ENCODE measurements at regions of chr6 and their contacts with region 1.

Region 1: DNA sequence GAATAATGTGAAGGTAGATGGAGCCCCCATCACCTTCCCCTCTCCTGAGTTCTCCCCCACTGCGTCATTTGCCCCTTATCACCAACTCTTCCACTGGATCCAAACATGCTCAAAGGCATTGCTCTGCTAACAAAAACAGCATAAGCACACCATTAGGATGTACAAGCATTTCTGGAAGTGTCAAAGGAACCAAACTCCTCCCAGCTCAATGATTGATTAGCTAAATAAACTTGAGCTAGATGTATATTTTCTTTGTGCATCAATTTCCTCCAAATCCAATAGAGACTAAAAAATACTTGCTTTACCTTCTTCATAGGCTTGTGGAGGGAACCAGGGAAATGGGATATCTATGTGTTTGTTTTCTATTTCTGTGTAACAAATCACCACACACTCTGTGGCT is 248.4 kb upstream of the JARID2 start:
- DNase-seq: no peak
- H3K4me3 ChIP-seq: no peak overlapping the region
- H3K27ac ChIP-seq: no peak overlapping the region
- H3K4me1 ChIP-seq: peaks cover 20% of the 10 kb centered on the region
- H3K27me3 ChIP-seq: no peaks in the 10 kb centered on the region
- CTCF ChIP-seq: no peak

Region 2: DNA sequence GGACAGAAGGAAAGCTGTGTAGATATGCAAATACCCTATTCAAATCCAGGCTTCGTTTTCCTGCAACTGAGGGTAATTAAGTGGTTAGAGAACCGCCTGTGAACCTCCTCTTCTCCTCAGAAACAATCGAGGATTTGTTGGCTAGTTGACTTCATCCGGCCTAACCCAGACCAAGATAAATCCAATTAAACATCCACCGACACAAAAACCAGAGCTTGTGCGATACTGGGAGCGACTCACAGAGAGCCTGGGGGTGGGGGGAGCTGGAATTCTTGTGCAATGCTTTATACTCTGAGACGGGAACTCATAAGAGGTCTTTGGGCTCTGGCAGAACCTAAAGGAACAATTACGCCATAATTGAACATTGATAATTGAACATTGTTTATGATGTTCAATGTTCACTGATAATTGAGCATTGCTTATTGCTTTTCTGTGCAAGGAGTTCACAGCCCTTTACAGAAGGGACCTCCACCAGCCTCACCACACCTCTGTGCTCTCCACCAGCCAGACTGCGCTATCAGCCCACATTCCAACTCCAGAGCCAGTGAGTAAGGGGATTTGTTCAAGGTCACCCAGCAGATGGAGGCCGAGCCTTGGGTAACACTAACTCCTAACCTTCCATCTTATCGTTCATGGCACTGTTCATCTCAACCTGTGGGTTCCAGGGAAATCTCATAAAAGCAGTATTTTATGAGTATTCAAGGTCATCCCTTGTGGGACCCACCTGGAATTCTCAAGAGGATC is 181.2 kb before region 1 on chr6:
- CTCF ChIA-PET with region 1: no interaction called
- POLR2A ChIA-PET with region 1: no interaction called
- intact Hi-C with region 1: no loop called
- DNase-seq: peak; percentile 88
- H3K4me3 ChIP-seq: no peak overlapping the region
- H3K27ac ChIP-seq: peak overlapping the region; percentile 57
- H3K4me1 ChIP-seq: peaks cover 33% of the 10 kb centered on the region
- H3K27me3 ChIP-seq: no peaks in the 10 kb centered on the region
- CTCF ChIP-seq: no peak

Region 3: GRCh38 chr6:15046751-15047150 is 49.2 kb after region 1 on chr6:
- CTCF ChIA-PET with region 1: no interaction called
- POLR2A ChIA-PET with region 1: interaction called, 10 read pairs
- intact Hi-C with region 1: no loop called
- DNase-seq: no peak
- H3K4me3 ChIP-seq: no peak overlapping the region
- H3K27ac ChIP-seq: no peak overlapping the region
- H3K4me1 ChIP-seq: no peaks in the 10 kb centered on the region
- H3K27me3 ChIP-seq: no peaks in the 10 kb centered on the region
- CTCF ChIP-seq: no peak

Region 4: DNA sequence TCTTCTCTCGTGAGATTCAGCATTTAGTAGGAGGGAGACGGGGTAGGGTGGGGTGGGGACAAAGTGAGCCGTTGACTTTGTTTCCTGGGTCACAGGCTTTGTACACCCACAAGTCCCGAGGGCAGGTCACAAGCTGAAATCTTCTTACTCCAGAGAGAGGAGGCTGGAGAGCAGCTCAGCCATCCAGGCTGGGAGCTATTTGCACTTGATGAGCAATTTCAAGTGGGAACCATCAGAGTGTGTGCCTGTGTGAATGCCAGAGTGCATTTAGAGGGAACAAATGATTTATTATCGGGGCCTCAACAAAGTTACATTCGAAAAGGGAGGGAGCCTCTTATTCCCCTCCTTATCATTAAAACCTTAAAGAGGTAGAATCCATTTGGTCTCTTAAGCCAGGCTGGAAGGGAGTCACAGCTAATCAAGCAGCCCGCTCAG is 92.7 kb after region 1 on chr6:
- CTCF ChIA-PET with region 1: no interaction called
- POLR2A ChIA-PET with region 1: no interaction called
- intact Hi-C with region 1: no loop called
- DNase-seq: no peak
- H3K4me3 ChIP-seq: no peak overlapping the region
- H3K27ac ChIP-seq: no peak overlapping the region
- H3K4me1 ChIP-seq: peaks cover 10% of the 10 kb centered on the region
- H3K27me3 ChIP-seq: no peaks in the 10 kb centered on the region
- CTCF ChIP-seq: no peak

Measured in A673 (cell line).